ENCODE measurements at regions of chr12 and their contacts with region 1.

Region 1: DNA sequence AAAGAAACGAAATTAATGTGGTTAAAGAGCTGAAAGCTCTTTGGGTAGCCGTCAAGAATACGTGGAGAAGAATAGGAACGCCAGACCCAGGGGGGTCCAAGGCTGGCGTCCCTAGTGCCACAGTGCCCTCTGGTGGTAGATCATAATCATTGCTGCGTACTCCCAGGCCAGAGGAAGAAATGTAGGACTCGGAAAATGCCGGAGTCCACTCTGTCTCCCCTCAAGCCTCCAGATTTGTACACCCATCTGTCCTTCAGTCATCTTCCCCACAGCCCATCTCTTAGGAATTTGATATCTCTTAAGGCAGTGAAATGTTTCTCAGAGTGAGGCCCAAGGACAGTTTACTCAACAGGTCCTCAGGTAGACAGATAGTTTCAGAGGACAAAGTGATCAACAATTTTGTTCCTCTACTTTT is 25.4 kb upstream of the PLEKHG6 start:
- DNase-seq: peak; percentile 25 to 88 (median 64)

Region 2: DNA sequence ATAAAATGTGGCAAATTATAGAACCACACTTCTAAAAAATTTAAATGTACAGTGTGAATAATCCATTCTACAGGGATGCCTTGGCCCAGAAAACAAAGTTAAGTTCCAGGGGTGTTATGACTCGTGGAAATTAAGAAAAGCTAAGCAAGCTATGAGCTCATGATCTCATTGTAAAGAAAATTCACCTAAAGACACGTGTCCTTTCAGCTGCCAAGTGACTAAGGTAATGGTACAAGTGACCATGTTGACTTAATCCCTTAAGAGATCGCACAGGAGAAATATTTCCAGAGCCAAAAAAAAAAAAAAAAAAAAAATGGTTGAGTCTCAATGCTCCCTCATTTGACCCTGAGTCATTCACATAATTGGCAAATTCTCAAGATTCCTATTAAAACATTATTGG is 288.6 kb before region 1 on chr12:
- intact Hi-C with region 1: loop called (anchors 10 kb)
- DNase-seq: no peak

Region 3: GRCh38 chr12:6062757-6063735 is 222.0 kb before region 1 on chr12:
- intact Hi-C with region 1: loop called (anchors 2 kb)
- DNase-seq: peak; percentile 30 to 89 (median 76)

Region 4: DNA sequence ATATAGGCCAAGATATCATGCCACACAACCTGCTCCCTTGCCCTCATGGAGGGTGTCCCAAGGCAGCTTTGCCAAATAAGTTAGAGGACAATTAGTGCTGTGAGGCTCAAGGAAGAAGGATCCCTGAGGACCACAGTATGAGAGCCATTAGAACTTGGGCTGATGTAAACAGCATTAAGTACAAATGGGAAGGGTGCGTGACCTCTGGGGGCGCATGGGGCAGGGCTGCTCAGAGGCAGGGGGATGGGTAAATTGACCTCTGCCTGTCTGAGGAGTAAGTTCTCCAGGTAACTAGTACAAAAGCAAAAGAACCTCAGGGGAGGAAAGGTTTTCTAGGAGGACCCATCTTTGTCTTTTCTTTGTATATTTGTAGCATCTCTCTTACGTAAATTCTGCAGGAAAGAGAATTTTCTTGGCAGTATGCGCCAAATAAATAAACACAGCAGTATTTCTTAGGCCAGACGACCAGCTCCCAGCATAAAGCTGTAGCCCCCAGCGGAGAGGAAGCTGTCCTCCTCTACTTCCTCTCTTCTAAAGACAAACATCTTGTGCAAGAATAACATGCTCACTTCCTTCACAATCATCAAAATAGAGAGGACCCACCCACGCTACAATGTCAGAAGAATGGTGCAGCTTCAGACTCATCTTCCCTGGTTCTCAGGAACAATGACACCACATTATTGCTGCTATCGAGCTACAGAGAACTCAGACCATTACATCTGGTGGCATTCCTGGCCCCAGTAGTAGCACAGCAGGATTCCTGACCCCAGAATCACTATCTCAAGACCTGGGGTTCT is 144.2 kb before region 1 on chr12:
- intact Hi-C with region 1: no loop called
- DNase-seq: peak in 10 of 42 donors; percentile 11 to 44 (median 28)

Region 5: DNA sequence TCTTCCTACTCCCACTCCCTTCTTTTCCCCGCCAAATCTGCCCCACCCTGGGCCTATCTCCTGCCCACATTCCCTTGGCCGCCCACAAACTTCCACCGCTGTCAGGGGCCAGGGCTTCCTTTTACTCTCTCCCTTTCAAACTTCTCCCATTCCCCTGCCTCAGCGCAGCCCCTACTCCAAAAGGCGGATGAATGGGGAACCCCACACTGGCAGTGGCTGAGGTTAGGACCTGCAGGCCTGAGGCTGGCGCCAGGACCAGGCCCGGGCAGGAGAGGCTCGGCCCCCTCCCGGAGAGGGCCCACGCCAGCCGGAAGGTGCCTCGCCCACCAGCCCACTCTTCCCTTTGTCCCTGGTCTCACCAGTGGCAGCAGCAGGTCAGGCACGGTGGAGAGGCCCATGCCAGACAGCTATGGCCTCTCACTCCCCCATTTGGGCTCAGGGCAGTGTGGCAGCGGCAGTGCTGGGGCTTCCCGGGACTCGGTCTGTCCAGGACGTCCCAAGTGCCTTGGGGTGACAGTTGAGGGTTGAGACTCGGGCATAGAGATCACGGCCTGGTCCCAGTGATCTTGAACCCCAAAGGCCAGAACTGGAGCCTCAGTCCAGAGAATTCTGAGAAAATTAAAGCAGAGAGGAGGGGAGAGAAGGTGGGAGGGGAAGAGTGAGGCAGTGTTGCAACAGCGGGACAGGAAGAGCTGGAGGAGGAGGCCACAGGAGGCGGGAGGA is 56.5 kb after region 1 on chr12 and contains the start of gene TNFRSF1A:
- intact Hi-C with region 1: no loop called
- DNase-seq: peak in 19 of 42 donors; percentile 33 to 82 (median 53)